ENCODE measurements at regions of chr5 and their contacts with region 1.

Region 1: DNA sequence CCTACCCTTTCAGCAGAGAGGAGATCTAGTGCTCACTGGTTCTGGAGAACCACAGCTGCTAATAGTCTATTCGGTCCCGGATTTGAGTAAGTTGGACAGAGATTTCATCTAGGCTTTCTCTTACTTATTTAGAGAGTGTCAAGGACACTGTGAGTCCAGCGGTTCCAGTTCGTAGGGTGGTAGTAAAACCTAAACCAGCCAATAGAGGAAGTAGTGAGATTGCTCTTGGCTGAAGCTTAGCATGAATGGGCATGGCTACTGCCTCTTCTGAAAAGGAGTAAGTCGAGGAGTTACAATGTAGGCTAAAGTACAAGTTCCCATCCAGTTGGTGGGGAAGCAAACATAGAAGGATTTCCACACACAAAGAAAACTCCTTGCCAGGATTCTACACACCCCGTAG is 109.6 kb upstream of the MOCS2 start:
- DNase-seq: no peak
- H3K4me3 ChIP-seq: no peak overlapping the region
- H3K27ac ChIP-seq: no peak overlapping the region
- H3K4me1 ChIP-seq: no peaks in the 10 kb centered on the region
- H3K27me3 ChIP-seq: no peaks in the 10 kb centered on the region
- CTCF ChIP-seq: no peak

Region 2: DNA sequence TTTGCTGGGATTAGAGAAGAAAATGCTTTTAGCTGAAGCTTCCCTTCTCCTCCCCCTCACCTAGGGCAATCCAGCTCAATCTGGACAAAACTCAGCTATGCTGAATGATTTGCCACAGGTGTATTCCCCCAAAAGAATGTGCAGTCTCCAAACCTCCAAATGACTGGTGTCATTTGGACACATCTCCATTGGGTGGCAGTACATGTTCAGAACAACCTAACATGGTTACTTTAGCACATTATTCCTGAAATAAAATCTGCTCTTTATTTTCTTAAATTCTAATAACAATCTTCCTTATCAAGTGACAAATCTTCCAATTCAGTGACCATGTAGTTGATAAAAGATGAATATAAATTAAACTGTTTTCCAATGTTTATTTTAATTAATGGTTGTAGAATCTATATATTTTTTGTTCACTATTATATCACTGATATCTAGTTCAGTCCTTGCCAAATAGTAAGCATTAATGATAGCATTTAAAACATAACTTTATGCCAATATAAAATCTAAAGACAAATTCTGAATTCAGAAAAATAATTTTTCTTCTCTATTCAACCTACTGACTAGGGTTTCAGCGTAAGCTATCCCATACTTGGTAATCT is 48.3 kb before region 1 on chr5:
- CTCF ChIA-PET with region 1: no interaction called
- POLR2A ChIA-PET with region 1: no interaction called
- intact Hi-C with region 1: no loop called
- DNase-seq: peak in 1 of 2 experiments; percentile 11
- H3K4me3 ChIP-seq: no peak overlapping the region
- H3K27ac ChIP-seq: no peak overlapping the region
- H3K4me1 ChIP-seq: no peaks in the 10 kb centered on the region
- H3K27me3 ChIP-seq: no peaks in the 10 kb centered on the region
- CTCF ChIP-seq: peak; percentile 81

Region 3: DNA sequence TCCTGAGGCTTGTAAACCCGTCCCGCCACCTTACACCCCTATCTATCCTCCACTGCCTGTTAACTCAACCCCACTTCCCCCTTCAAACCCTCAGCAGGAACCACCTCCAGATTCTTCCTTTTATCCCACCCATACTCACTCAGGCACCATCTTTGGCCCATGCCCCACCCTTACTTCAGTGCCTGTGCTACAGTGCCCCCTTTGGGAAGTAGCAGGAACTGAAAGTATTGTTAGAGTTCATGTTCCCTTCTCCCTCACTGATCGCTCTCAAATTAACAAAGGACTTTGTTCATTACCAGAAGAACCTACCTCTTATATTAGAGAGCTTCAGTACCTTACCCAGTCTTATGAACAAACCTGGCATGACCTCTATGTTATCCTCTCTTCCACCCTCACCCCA is 17.4 kb before region 1 on chr5:
- CTCF ChIA-PET with region 1: no interaction called
- POLR2A ChIA-PET with region 1: no interaction called
- intact Hi-C with region 1: no loop called
- DNase-seq: no peak
- H3K4me3 ChIP-seq: no peak overlapping the region
- H3K27ac ChIP-seq: no peak overlapping the region
- H3K4me1 ChIP-seq: no peaks in the 10 kb centered on the region
- H3K27me3 ChIP-seq: no peaks in the 10 kb centered on the region
- CTCF ChIP-seq: 0 out of 2 replicates have a peak, but pooled peaks have one; percentile 24

Region 4: DNA sequence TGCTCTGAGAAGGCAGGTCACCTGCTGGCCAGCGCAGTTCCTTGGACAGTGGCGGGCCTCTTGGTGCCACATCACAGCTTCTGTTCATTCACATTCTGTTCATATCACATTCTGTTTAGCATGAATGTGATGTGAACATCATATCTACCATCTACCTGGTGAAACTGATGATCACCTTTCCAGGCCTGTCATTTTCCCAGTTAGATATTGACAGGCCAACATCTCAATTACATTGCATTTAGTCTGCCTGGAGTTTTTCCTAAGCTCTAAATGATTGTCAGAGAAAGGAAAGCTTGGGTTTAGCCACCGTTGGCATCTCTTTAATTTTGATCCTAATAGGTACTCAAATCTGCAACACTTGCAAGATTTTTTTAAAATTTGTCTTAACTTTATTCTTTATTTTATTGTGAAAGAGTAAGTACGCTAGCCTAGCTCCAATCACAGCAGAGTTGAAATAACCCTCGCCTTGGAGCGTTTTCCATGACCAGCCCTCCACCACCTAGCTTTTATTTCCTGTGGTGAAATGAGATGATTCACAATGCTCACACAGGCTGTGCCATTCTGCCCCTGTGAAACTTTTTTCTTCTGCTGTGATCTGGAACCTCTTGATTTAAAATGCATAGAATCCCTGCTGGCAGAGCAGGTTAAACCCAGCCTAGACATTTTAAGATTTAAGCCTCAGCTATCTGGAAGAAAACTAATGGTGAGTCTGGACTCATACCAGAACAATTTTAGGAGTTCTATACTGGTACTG is 1541.2 kb after region 1 on chr5:
- CTCF ChIA-PET with region 1: no interaction called
- POLR2A ChIA-PET with region 1: interaction called, 12 read pairs
- intact Hi-C with region 1: no loop called
- DNase-seq: no peak
- H3K4me3 ChIP-seq: no peak overlapping the region
- H3K27ac ChIP-seq: no peak overlapping the region
- H3K4me1 ChIP-seq: peaks cover 16% of the 10 kb centered on the region
- H3K27me3 ChIP-seq: no peaks in the 10 kb centered on the region
- CTCF ChIP-seq: no peak